ENCODE measurements at regions of chrX and their contacts with region 1.

Region 1: DNA sequence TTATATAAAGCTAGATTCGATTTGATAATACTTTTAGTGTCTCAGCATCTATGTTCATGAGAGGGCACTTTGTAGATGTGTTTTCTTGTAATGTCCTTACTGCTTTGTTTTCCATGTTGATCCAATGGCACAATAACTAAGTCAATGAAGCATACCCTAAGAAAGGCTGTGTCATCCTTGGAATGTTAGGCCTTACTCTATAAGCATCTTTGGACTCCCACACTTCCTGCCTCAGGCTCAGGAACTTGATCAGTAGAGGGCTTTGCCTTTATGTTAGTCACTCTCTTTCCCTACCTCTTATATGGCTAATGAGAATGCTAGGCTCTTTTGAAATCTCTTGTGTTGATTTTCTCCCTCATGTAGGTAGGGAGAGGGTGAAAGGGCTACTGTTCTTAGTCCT is 33.2 kb upstream of the EDA2R start:
- DNase-seq: no peak
- ATAC-seq: no peak
- H3K4me3 ChIP-seq: no peak overlapping the region
- H3K27ac ChIP-seq: no peak overlapping the region
- H3K4me1 ChIP-seq: no peaks in the 10 kb centered on the region
- H3K27me3 ChIP-seq: no peaks in the 10 kb centered on the region
- CTCF ChIP-seq: no peak
- POLR2A ChIP-seq: no peak

Region 2: GRCh38 chrX:66547847-66548369 is 124.2 kb before region 1 on chrX:
- intact Hi-C with region 1: loop called in 1 of 10 experiments (anchors 5 kb)
- DNase-seq: no peak
- ATAC-seq: no peak
- H3K4me3 ChIP-seq: no peak overlapping the region
- H3K27ac ChIP-seq: no peak overlapping the region
- H3K4me1 ChIP-seq: no peaks in the 10 kb centered on the region
- H3K27me3 ChIP-seq: no peaks in the 10 kb centered on the region
- CTCF ChIP-seq: no peak
- POLR2A ChIP-seq: no peak

Region 3: GRCh38 chrX:66684196-66684595 is 12.1 kb after region 1 on chrX:
- intact Hi-C with region 1: no loop called
- DNase-seq: no peak
- ATAC-seq: no peak
- H3K4me3 ChIP-seq: no peak overlapping the region
- H3K27ac ChIP-seq: no peak overlapping the region
- H3K4me1 ChIP-seq: no peaks in the 10 kb centered on the region
- H3K27me3 ChIP-seq: no peaks in the 10 kb centered on the region
- CTCF ChIP-seq: no peak
- POLR2A ChIP-seq: no peak

Region 4: DNA sequence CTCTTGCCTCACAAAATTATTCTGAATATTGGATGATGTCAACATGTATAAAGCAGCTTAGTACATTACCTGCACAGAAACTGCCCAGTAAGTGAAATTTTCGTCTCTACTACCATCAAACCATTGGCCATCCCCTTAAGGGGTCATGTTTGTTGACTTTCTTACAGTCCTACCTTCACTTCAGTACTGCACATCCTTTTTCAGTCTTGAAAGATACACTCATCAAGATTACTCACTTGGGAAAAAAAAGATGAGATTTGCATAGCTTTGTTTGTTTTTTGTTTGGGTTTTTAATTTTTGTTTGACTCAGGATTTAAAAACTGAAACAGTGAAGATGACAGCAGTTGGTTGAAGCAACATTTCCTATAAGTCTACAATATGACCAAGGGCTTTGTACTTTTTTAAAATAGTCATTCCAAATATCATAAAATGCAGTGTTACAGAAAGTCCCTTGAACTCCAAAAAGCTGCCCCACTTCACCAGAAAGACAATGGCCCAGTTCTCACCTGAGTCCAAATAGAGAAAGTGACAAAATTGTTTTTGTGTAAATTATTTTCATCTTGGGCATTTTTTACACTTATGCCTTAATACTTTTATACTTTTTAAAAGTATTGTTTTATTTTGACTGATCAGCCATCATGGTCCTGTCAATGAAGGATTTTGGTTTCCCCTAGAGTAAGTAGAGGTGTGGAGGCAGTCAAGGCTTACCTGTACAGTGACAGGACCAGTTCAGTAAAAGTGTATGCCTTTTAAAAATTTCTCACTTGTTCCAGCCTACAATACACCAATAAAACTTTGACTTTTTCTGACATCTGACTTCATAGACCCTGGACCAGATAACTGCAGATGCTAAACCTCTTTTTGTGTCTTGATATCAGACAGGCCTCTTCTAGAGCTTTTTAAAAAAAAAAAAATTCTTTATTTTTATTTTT is 26.4 kb after region 1 on chrX:
- intact Hi-C with region 1: no loop called
- DNase-seq: no peak
- ATAC-seq: no peak
- H3K4me3 ChIP-seq: no peak overlapping the region
- H3K27ac ChIP-seq: no peak overlapping the region
- H3K4me1 ChIP-seq: no peaks in the 10 kb centered on the region
- H3K27me3 ChIP-seq: peaks cover 0 to 13% (median 0%) of the 10 kb centered on the region in 9 donors
- CTCF ChIP-seq: no peak
- POLR2A ChIP-seq: no peak

Measured in heart left ventricle (tissue), 16 donors.